ENCODE measurements at regions of chr9 and their contacts with region 1.

Region 1: DNA sequence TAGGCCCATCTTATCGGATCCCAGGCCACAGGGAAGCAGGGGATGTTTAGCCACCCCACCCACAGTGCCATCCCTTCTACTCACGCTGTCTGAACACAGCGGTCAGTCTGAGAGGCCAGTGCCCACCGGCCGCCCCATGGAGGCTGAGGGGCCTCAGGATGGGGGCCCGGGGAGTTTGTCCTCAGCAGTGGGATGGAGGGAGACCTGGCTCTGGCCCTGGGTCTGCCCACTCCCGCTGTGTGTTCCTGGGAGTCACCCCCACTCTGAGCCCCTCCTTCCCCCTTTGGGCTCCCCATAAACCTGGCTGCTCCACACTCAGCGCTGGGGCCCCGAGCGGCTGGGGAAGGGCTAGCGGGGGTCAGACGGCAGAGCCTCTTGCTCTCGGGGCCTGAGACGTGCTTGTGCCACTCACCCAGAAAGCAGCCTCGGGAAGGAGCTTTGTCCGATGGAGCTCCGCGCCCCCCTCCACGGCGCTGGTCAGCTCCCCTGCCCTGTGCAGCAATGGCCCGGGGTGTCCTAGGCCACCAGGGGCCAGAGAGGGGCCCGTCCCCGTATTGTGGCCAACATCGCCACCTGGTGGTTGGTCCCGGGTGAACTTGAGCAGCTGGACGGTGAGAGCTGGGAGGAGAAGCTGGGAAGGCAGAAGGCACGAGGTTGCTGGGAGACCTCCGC is 10.9 kb upstream of the LAMC3 start:
- DNase-seq: peak; percentile 87
- H3K4me3 ChIP-seq: no peak overlapping the region
- H3K27ac ChIP-seq: no peak overlapping the region
- H3K4me1 ChIP-seq: peaks cover 9% of the 10 kb centered on the region; the same call in 1 of the 2 replicates
- H3K27me3 ChIP-seq: peaks cover 14% of the 10 kb centered on the region

Region 2: DNA sequence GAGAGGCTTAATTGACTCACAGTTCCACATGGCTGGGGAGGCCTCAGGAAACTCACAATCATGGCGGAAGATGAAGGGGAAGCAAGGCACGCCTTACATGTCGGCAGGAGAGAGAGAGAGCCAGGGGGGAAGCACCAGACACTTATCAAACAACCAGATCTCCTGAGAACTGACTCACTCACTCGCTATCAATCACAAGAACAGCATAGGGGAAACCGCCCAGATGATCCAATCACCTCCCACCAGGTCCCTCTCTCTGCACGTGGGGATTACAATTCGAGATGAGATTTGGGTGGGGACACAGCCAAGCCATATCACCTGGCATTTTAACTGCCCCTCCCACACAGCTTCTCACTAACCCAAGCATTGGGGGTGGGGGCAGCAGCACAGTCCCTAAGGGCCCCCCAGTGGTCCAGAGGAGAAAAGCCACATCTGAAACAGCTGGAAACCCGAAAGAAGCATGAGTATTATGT is 629.4 kb before region 1 on chr9:
- in situ Hi-C with region 1: no loop called
- DNase-seq: peak; percentile 18
- H3K4me3 ChIP-seq: no peak overlapping the region
- H3K27ac ChIP-seq: no peak overlapping the region
- H3K4me1 ChIP-seq: no peaks in the 10 kb centered on the region
- H3K27me3 ChIP-seq: 0 out of 2 replicates have a peak, but pooled peaks cover under 1% of the 10 kb centered on the region

Region 3: DNA sequence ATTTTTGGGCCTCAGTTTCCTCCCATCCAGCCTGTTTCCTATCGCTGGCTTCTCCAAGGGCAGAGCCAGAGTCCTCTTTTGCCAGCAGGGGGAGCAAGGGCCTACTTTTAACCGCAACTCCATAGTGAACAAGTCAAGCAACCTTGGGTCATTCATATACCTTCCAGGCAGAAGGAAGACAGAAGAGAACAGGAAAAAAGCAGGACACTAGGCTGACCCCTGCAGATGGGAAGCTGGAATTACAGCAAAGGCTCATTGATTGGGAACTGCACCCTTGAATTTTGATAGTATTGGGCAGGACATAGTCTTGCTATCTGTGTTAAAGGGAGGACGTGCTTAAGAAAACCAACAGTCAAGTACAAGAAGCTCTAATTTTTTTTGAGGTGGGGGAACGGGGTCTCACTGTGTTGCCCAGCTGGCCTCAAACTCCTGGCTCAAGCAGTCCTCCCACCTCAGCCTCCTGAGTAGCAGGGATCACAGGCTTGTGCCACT is 131.5 kb before region 1 on chr9:
- in situ Hi-C with region 1: loop called (anchors 5 kb)
- DNase-seq: peak; percentile 88
- H3K4me3 ChIP-seq: no peak overlapping the region
- H3K27ac ChIP-seq: peak overlapping the region; percentile 38
- H3K4me1 ChIP-seq: peaks cover 25% of the 10 kb centered on the region
- H3K27me3 ChIP-seq: no peaks in the 10 kb centered on the region

Measured in GM23248 (cell line).